Common myeloid progenitor, CD34-positive (primary cell): ENCODE measurements at regions of chr1 and their contacts with region 1.

Region 1: GRCh38 chr1:1374929-1375662 is at the start of gene AURKAIP1:
- DNase-seq: peak; percentile 99 to 100 (median 100)
- H3K4me3 ChIP-seq: peak within 1 kb of the TSS; percentile 77 to 97 (median 90)
- H3K27ac ChIP-seq: peak within 1 kb of the TSS; percentile 85 to 91
- H3K4me1 ChIP-seq: peaks cover 0 to 47% (median 40%) of the 10 kb centered on the region in 4 experiments
- H3K27me3 ChIP-seq: peaks cover 0 to 6% (median 0%) of the 10 kb centered on the region in 5 experiments

Region 2: GRCh38 chr1:1348420-1349255 is 26.5 kb before region 1 on chr1:
- CTCF ChIA-PET with region 1: interaction called, 27 read pairs
- POLR2A ChIA-PET with region 1: interaction called, 3 read pairs
- DNase-seq: peak in 1 of 3 donors; percentile 35
- H3K4me3 ChIP-seq: peak overlapping the region; percentile 54 to 86 (median 73)
- H3K27ac ChIP-seq: peak overlapping the region in 1 of 2 experiments; percentile 66
- H3K4me1 ChIP-seq: peaks cover 0 to 22% (median 18%) of the 10 kb centered on the region in 4 experiments
- H3K27me3 ChIP-seq: peaks cover 0 to 23% (median 2%) of the 10 kb centered on the region in 5 experiments

Region 3: GRCh38 chr1:1399187-1399871 is 24.2 kb after region 1 on chr1 and contains the start of gene CCNL2:
- CTCF ChIA-PET with region 1: interaction called, 12 read pairs
- POLR2A ChIA-PET with region 1: interaction called, 10 read pairs
- DNase-seq: peak; percentile 99
- H3K4me3 ChIP-seq: peak within 1 kb of the TSS; percentile 86 to 97 (median 92)
- H3K27ac ChIP-seq: peak within 1 kb of the TSS; percentile 79 to 91
- H3K4me1 ChIP-seq: peaks cover 0 to 33% (median 30%) of the 10 kb centered on the region in 4 experiments
- H3K27me3 ChIP-seq: no peaks in the 10 kb centered on the region